ENCODE measurements at regions of chr11 and their contacts with region 1.

Region 1: DNA sequence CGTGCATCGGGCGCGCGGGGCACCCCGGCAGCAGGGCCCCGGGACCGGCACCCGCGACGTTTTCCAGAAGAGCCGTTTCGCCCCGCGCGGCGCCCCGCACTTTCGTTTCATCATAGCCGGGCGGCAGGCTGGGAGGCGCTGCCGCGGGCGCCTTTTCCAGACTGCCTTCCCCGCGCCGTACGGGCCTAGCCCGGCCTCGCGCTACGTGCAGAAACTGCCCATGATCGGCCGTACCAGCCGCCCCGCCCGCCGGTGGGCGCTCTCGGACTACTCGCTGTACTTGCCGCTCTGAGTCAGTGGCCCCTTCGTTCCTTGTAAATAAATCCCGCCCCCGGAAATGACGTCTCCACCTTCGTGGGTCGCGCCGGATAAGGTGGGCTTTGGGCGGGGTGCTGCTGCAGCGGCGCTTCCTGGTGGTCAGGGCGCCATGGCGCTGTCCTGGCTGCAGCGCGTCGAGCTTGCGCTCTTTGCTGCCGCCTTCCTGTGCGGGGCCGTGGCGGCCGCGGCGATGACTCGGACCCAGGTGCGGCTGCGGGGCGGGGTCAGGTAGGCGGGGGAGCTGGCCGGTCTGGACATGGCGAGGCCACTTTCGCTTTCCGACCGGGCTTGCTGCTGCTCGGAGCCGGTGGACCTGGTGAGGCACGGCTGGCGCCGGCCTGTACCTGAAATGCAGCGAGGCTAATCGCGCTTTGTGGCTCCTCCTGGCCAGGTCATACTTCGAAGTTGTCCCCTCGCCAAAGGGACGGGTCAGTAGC is at the start of gene TMEM179B:
- DNase-seq: peak; percentile 97
- H3K4me3 ChIP-seq: peak within 1 kb of the TSS; percentile 1 to 95 (median 43)
- H3K27ac ChIP-seq: peak within 1 kb of the TSS; percentile 32
- H3K4me1 ChIP-seq: peaks cover 14% of the 10 kb centered on the region
- H3K27me3 ChIP-seq: no peaks in the 10 kb centered on the region
- CTCF ChIP-seq: peak; percentile 62 to 83
- POLR2A ChIP-seq: peak; percentile 97
- total RNA-seq, gene TMEM179B: 27.6 and 27.8 TPM in 2 replicates

Region 2: GRCh38 chr11:62753736-62754603 is 33.2 kb before region 1 on chr11 and contains the start of gene ZBTB3:
- CTCF ChIA-PET with region 1: interaction called, 26 read pairs
- POLR2A ChIA-PET with region 1: interaction called, 4 read pairs
- dilution Hi-C with region 1: no loop called
- intact Hi-C with region 1: no loop called
- DNase-seq: peak; percentile 100
- H3K4me3 ChIP-seq: peak within 1 kb of the TSS; percentile 32 to 71 (median 67)
- H3K27ac ChIP-seq: peak within 1 kb of the TSS; percentile 61
- H3K4me1 ChIP-seq: peaks cover 5% of the 10 kb centered on the region
- H3K27me3 ChIP-seq: no peaks in the 10 kb centered on the region
- CTCF ChIP-seq: no peak
- POLR2A ChIP-seq: peak; percentile 75
- total RNA-seq, gene ZBTB3: 6.9 and 8.1 TPM in 2 replicates

Region 3: DNA sequence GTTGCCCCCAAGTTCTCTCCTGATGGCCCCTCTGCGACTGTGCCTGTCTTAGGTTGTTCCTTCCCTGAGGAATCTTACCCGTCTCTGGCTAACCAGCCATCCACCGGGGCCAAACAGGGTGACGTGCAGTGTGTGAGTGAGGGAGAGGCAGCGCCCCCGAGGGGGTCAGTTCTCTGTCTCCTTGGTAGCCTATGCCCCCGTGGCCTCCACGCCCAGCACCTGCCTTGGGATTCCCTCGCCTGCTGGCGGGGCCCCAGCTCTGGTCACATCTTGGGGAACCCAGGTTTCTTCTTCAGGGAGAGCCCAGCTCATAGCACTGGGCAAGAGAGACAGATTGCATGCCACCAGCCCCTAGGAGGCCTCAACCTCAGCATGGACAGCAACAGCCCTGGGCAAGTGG is 12.3 kb after region 1 on chr11:
- CTCF ChIA-PET with region 1: interaction called, 21 read pairs
- POLR2A ChIA-PET with region 1: interaction called, 3 read pairs
- dilution Hi-C with region 1: no loop called
- intact Hi-C with region 1: loop called (anchors 1 kb)
- DNase-seq: no peak
- H3K4me3 ChIP-seq: no peak overlapping the region
- H3K27ac ChIP-seq: no peak overlapping the region
- H3K4me1 ChIP-seq: peaks cover 10% of the 10 kb centered on the region
- H3K27me3 ChIP-seq: no peaks in the 10 kb centered on the region
- CTCF ChIP-seq: no peak
- POLR2A ChIP-seq: no peak

Region 4: DNA sequence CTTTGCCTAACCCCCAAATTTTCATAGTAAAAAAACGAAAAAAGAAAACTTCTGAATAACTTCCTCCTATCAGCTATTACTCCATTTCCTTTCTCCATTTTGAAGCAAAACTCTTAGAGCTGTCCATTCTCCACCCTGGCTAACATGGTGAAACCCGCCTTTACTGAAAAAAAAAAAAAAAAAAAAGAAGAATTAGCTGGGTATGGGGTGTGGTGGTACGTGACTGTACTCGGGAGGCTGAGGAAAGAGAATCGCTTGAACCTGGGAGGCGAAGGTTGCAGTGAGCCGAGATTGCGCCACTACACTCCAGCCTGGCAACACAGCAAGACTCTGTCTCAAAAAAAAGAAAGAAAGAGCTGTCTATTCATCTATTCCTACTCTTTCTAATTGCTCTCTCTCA is 29.4 kb after region 1 on chr11:
- CTCF ChIA-PET with region 1: interaction called, 10 read pairs
- POLR2A ChIA-PET with region 1: no interaction called
- dilution Hi-C with region 1: no loop called
- intact Hi-C with region 1: no loop called
- DNase-seq: no peak
- H3K4me3 ChIP-seq: no peak overlapping the region
- H3K27ac ChIP-seq: no peak overlapping the region
- H3K4me1 ChIP-seq: no peaks in the 10 kb centered on the region
- H3K27me3 ChIP-seq: no peaks in the 10 kb centered on the region
- CTCF ChIP-seq: no peak
- POLR2A ChIP-seq: no peak

Region 5: DNA sequence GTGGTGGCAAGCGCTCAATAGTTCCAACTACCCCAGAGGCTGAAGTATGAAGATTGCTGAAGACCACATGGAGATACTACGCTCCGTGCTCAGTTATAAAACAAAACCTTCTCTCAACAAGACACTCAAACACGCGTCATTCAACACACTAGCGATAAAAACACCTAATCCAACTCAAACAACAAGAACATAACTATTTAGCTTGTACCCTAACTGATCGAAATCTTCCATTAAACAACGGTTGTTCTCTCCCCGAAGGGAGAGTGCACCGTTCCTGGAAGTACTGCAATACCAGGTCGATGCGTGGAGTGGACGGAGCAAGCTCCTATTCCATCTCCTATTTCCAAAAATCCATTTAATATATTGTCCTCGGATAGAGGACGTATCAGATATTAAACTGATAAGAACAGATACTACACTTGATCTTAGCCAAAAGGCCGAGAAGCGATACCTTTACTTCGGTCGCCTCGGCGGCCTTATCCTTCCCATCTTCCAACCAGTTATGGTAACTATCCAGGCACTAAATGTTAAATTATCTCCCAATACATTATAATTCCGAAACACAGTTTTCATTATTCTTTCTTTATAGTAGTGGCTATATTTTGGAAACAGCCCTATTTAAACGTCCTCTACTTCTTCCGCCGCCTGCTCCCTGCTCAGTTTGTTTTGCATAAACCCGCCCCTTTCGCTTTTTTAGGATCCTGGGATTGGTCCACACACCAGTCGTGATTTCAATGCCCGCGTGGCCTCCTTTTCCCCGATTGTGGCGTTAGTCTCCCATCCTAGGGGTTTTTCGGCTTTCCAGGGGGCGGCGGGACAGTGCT is 54.4 kb after region 1 on chr11:
- CTCF ChIA-PET with region 1: interaction called, 27 read pairs
- POLR2A ChIA-PET with region 1: interaction called, 33 read pairs
- dilution Hi-C with region 1: no loop called
- intact Hi-C with region 1: loop called (anchors 1 kb)
- DNase-seq: peak; percentile 99
- H3K4me3 ChIP-seq: peak overlapping the region in 2 of 3 experiments; percentile 9 to 15
- H3K27ac ChIP-seq: peak overlapping the region; percentile 89
- H3K4me1 ChIP-seq: peaks cover 7% of the 10 kb centered on the region
- H3K27me3 ChIP-seq: no peaks in the 10 kb centered on the region
- CTCF ChIP-seq: no peak
- POLR2A ChIP-seq: peak; percentile 100

Region 6: GRCh38 chr11:62860835-62861563 is 73.8 kb after region 1 on chr11:
- CTCF ChIA-PET with region 1: interaction called, 105 read pairs
- POLR2A ChIA-PET with region 1: interaction called, 9 read pairs
- dilution Hi-C with region 1: no loop called
- intact Hi-C with region 1: loop called (anchors 1 kb)
- DNase-seq: no peak
- H3K4me3 ChIP-seq: no peak overlapping the region
- H3K27ac ChIP-seq: no peak overlapping the region
- H3K4me1 ChIP-seq: peaks cover 6% of the 10 kb centered on the region
- H3K27me3 ChIP-seq: no peaks in the 10 kb centered on the region
- CTCF ChIP-seq: no peak
- POLR2A ChIP-seq: no peak

Region 7: GRCh38 chr11:62880803-62881578 is 93.8 kb after region 1 on chr11 and contains the start of gene SLC3A2:
- CTCF ChIA-PET with region 1: interaction called, 36 read pairs
- POLR2A ChIA-PET with region 1: interaction called, 10 read pairs
- dilution Hi-C with region 1: no loop called
- intact Hi-C with region 1: loop called (anchors 1 kb)
- DNase-seq: peak; percentile 91
- H3K4me3 ChIP-seq: peak within 1 kb of the TSS; percentile 75 to 100 (median 95)
- H3K27ac ChIP-seq: peak within 1 kb of the TSS; percentile 100
- H3K4me1 ChIP-seq: peaks cover 45% of the 10 kb centered on the region
- H3K27me3 ChIP-seq: no peaks in the 10 kb centered on the region
- CTCF ChIP-seq: peak; percentile 63 to 89
- POLR2A ChIP-seq: peak; percentile 99
- total RNA-seq, gene SLC3A2: 190 and 208 TPM in 2 replicates

Measured in endothelial cell of umbilical vein (primary cell).